Lower leg skin (tissue), 4 donors: ENCODE measurements at regions of chr1 and their contacts with region 1.

Region 1: GRCh38 chr1:189669846-189670245 is 807.8 kb downstream of the BRINP3 start:
- DNase-seq: no peak
- H3K4me3 ChIP-seq: no peak overlapping the region
- CTCF ChIP-seq: no peak
- POLR2A ChIP-seq: no peak

Region 2: GRCh38 chr1:189616669-189617292 is 53.1 kb before region 1 on chr1:
- intact Hi-C with region 1: no loop called
- DNase-seq: no peak
- H3K4me3 ChIP-seq: no peak overlapping the region
- CTCF ChIP-seq: no peak
- POLR2A ChIP-seq: no peak

Region 3: GRCh38 chr1:191206513-191207207 is 1536.8 kb after region 1 on chr1:
- intact Hi-C with region 1: loop called (anchors 5 kb)
- DNase-seq: no peak
- H3K4me3 ChIP-seq: no peak overlapping the region
- CTCF ChIP-seq: no peak
- POLR2A ChIP-seq: no peak